Right cardiac atrium (tissue), 5 donors: ENCODE measurements at regions of chr11 and their contacts with region 1.

Region 1: DNA sequence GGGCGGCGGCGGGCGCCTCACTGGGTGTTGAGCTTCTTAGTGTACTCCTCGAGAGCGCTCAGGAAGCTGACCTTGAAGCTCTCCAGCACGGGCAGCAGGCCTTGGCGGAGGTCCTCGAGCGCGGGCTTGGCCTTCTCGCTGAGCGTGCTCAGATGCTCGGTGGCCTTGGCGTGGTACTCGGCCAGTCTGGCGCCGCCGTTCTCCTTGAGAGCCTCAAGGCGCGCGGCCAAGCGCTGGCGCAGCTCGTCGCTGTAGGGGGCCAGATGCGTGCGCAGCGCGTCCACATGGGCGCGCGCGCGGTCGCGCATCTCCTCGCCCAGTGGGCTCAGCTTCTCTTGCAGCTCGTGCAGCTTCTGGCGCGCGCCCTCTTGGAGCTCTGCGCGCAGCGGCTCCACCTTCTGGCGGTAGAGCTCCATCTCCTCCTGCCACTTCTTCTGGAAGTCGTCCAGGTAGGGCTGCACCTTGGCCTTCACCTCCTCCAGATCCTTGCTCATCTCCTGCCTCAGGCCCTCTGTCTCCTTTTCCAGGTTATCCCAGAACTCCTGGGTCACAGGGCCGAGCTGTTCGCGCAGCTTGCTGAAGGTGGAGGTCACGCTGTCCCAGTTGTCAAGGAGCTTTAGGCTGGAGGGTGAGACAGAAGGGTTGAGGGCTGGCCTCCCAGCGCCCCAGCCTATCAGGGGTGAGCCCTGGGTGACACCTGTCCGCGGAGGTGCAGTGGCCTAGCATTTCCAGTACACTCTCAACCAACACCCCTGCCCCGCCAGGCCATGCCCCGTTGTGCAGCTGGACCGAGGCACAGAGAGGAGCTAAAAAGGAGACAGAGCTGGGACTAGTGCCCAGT is 1.4 kb downstream of the APOA1 start:
- DNase-seq: peak; percentile 93 to 99 (median 97)
- ATAC-seq: peak; percentile 87 to 88
- H3K4me3 ChIP-seq: no peak overlapping the region
- H3K27ac ChIP-seq: peak overlapping the region; percentile 42
- H3K4me1 ChIP-seq: peaks cover 3% of the 10 kb centered on the region
- H3K27me3 ChIP-seq: no peaks in the 10 kb centered on the region

Region 2: DNA sequence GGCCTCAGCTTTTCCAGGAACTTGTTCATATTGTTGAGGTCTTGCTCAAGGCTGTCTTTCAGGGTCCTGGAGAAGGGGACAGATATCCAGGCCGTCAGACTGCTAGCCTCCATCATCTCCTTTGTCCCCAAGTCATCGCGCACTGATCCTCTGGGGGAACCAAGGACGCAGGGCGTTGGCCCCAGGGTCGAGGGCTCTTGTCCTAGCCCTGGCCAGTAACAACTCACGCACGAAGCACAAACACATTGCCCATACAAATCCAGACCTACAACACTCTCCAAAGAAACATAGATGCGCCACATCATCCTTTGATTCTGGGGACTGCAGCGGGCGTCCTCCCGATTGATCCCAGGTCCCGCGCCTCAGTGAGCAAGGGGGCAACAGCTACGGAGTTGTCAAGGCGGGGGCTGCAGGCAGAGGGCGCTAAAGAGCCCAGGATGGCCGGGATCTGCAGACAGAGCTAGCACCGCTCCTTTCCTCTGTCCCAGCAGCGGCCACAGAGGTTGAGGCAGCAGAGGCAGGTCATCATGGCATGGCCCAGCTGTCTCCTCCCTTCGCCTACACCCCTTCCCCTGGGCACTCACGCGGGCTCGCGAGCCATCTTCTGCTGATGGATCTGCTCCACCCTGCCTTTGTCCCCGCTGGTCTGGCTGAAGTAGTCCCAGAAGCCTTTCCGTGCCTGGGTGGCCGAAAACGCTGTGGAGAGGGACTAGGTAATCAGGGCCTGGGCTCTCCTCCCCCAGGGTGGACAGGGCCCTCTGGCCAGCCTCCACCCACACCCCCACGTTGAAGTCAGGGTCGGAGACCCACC is 44.8 kb before region 1 on chr11:
- intact Hi-C with region 1: loop called in 3 of 4 experiments (anchors 5 kb)
- DNase-seq: peak; percentile 79 to 92 (median 92)
- ATAC-seq: peak; percentile 70
- H3K4me3 ChIP-seq: no peak overlapping the region
- H3K27ac ChIP-seq: no peak overlapping the region
- H3K4me1 ChIP-seq: peaks cover 3% of the 10 kb centered on the region
- H3K27me3 ChIP-seq: no peaks in the 10 kb centered on the region

Region 3: DNA sequence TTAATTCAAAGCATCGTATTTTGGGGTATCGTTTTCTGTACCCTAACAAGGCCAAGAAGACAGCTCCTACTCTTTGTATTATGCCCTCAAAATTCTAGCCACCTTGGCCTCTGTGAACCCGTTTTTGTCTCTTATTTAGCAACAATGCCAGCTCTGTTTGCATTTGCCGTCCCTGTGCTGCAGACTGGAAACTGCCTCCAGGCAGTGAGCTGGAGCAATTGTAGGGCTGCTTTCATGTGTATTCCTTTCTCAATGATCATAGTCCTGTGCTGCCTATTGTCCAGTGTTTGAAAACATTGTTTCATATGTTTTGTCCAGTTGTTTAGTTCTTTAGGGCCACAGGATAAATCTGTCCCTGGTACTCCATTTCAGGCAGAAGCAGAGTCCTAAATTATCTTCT is 435.2 kb after region 1 on chr11:
- intact Hi-C with region 1: no loop called
- DNase-seq: no peak
- ATAC-seq: no peak
- H3K4me3 ChIP-seq: no peak overlapping the region
- H3K27ac ChIP-seq: no peak overlapping the region
- H3K4me1 ChIP-seq: no peaks in the 10 kb centered on the region
- H3K27me3 ChIP-seq: no peaks in the 10 kb centered on the region